ENCODE measurements at regions of chr22 and their contacts with region 1.

Region 1: DNA sequence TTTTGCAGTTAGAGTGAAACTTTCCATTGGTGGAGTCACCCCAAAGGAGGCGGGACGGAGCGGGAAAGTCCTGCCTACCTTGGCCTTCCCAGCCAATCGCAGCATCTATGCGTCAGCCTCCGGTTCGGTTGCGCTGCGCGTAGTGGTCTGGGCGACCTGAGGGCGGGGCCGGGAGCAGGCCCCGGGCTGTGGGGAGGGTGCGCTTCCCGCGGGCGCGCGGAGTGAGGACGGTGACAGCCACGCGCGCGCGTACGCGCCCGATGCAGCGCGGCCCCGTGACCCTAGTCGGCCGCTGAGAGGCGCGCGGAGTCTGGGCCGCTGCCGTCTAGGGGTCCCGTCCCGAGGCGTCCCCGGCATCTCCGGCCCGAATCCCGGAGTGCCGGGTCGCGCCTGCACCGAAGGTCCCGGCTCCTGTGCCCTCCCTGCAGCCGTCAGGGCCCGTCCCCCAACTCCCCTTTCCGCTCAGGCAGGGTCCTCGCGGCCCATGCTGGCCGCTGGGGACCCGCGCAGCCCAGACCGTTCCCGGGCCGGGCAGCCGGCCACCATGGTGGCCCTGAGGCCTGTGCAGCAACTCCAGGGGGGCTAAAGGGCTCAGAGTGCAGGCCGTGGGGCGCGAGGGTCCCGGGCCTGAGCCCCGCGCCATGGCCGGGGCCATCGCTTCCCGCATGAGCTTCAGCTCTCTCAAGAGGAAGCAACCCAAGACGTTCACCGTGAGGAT is at the start of gene NF2:
- DNase-seq: peak; percentile 96 to 100 (median 98)
- ATAC-seq: peak; percentile 97
- H3K4me3 ChIP-seq: peak within 1 kb of the TSS; percentile 82
- H3K4me3 Mint-ChIP-seq: peak within 1 kb of the TSS; percentile 98
- H3K27ac ChIP-seq: peak within 1 kb of the TSS; percentile 87 to 90
- H3K27ac Mint-ChIP-seq: peak within 1 kb of the TSS; percentile 96
- H3K4me1 ChIP-seq: peaks cover 33% of the 10 kb centered on the region
- H3K4me1 Mint-ChIP-seq: peaks cover 37% of the 10 kb centered on the region
- H3K27me3 ChIP-seq: no peaks in the 10 kb centered on the region
- H3K27me3 Mint-ChIP-seq: no peaks in the 10 kb centered on the region
- CTCF ChIP-seq: no peak
- total RNA-seq, gene NF2: 23.1 to 24.5 TPM

Region 2: DNA sequence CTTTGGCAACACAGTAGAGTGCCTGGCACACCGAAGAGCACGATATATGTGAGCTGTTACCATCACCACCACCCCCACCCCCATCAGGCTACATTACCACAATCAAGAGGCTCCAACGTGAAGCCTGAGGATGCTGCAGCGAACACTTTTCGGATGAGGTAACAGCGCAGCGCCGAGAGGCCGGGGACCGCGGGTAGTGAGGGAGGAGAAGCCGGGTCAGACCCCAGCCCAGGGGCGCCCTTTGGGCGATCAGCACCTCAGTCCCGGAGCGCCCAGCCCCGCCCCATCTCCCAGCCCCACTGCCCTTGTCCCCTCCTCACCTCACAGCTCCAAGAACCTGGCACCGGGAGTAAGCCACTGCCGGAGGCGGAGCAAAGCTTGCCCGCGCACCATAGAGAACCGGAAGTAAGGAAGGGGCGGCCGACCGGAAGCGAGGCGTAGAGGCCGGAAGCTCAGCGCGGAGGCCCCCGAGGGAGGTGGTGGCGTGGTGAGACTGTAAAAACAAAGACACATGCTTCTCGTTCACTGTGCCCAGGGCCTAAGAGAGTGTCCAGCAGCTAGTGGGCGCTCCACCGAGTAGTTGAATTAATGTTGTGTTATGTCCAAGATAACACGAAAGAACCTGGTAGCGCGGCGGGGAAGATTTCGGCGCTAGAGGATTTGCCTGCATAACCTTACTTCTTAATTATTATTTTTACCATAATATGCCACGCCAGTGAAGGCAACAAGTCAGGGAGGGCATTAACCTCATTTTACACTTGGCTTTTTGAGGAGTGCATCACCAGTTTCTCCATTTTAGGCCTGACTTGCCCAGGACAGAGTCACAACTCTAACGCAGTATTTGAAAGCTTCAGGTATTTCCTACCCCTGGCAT is 49.9 kb before region 1 on chr22 and contains the start of gene THOC5:
- CTCF ChIA-PET with region 1: no interaction called
- POLR2A ChIA-PET with region 1: interaction called, 32 read pairs
- intact Hi-C with region 1: loop called in 1 of 2 experiments (anchors 1 kb)
- DNase-seq: peak; percentile 80 to 93 (median 86)
- ATAC-seq: peak; percentile 93
- H3K4me3 ChIP-seq: peak within 1 kb of the TSS; percentile 83
- H3K4me3 Mint-ChIP-seq: peak within 1 kb of the TSS; percentile 95
- H3K27ac ChIP-seq: peak within 1 kb of the TSS; percentile 54 to 84
- H3K27ac Mint-ChIP-seq: peak within 1 kb of the TSS; percentile 94
- H3K4me1 ChIP-seq: peaks cover 22% of the 10 kb centered on the region
- H3K4me1 Mint-ChIP-seq: peaks cover 15% of the 10 kb centered on the region
- H3K27me3 ChIP-seq: no peaks in the 10 kb centered on the region
- H3K27me3 Mint-ChIP-seq: no peaks in the 10 kb centered on the region
- CTCF ChIP-seq: no peak
- total RNA-seq, gene THOC5: 27.1 to 32.9 TPM

Region 3: DNA sequence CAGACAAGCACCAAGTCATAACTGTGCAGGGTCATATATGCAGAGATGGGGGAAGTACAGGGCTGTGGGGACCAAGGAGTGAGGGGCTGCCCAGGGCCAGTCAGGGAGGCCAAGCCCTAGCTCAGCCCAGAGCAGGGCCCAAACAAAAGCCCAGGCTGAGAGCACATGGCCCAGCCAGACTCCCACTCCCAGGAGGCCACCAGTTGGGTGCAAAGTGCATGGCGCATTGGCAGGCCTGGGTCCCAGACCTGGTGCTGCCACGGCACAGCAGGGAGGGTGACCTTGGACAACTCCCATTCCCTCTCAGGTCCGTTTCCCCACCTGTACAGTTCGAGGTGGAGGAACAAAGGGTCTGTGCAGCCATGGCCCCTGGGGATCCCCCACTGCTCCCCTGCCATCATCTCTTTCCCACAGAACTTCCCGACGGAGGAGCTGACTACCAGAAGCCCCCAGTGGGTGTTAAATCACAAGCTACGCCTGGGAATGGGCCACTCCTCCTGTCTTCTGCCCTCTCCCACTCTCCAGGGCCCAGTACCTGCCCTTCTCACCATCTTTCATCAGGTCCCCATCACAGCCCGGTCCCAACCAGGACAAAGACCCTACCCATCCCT is 23.2 kb before region 1 on chr22:
- CTCF ChIA-PET with region 1: no interaction called
- POLR2A ChIA-PET with region 1: interaction called, 4 read pairs
- intact Hi-C with region 1: loop called in 1 of 2 experiments (anchors 2 kb)
- DNase-seq: peak in 2 of 14 experiments; percentile 17 to 33
- ATAC-seq: no peak
- H3K4me3 ChIP-seq: peak overlapping the region; percentile 70
- H3K4me3 Mint-ChIP-seq: peak overlapping the region; percentile 95
- H3K27ac ChIP-seq: peak overlapping the region; percentile 34 to 46
- H3K27ac Mint-ChIP-seq: peak overlapping the region; percentile 86
- H3K4me1 ChIP-seq: peaks cover 19% of the 10 kb centered on the region
- H3K4me1 Mint-ChIP-seq: peaks cover 18% of the 10 kb centered on the region
- H3K27me3 ChIP-seq: no peaks in the 10 kb centered on the region
- H3K27me3 Mint-ChIP-seq: no peaks in the 10 kb centered on the region
- CTCF ChIP-seq: no peak

Region 4: GRCh38 chr22:29587938-29588699 is 15.4 kb before region 1 on chr22:
- CTCF ChIA-PET with region 1: interaction called, 7 read pairs
- POLR2A ChIA-PET with region 1: interaction called, 6 read pairs
- intact Hi-C with region 1: loop called in 1 of 2 experiments (anchors 1 kb)
- DNase-seq: peak in 1 of 14 experiments; percentile 31
- ATAC-seq: no peak
- H3K4me3 ChIP-seq: no peak overlapping the region
- H3K4me3 Mint-ChIP-seq: no peak overlapping the region
- H3K27ac ChIP-seq: no peak overlapping the region
- H3K27ac Mint-ChIP-seq: no peak overlapping the region
- H3K4me1 ChIP-seq: peaks cover 12% of the 10 kb centered on the region
- H3K4me1 Mint-ChIP-seq: peaks cover 11% of the 10 kb centered on the region
- H3K27me3 ChIP-seq: no peaks in the 10 kb centered on the region
- H3K27me3 Mint-ChIP-seq: no peaks in the 10 kb centered on the region
- CTCF ChIP-seq: no peak

Region 5: DNA sequence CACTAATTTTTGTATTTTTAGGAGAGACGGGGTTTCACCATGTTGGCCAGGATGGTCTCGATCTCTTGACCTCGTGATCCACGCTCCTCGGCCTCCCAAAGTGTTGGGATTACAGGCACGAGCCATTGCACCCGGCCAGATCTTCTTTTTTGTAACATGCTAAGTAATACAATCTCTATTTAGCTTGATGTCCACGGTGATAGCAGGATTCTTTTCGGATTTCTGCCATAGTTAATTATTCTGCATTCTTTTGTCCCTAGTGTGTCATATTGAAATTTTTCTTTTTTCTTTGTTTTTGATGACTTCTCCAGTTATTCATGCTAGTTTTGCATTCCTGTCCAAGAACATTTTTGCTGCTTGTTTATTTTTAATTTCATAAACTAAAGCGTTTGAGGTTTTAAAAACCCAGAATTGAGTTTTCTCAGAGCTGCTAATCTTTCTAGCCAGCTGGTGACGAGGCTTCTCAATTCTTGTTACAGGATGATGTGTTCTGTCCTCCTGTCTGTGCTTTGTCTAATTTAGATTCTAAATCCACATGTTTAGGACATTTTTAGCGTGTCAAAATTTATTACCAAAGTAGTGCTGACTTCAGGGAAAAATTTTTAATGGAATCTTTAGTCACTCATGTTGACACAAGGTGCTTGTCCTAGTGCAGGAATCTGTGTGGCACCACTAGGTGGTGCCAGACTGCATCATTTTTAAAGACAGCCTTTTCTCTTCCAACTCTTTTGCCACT is 21.7 kb after region 1 on chr22:
- CTCF ChIA-PET with region 1: interaction called, 14 read pairs
- POLR2A ChIA-PET with region 1: interaction called, 22 read pairs
- intact Hi-C with region 1: no loop called
- DNase-seq: peak in 8 of 14 experiments; percentile 9 to 73 (median 40)
- ATAC-seq: peak; percentile 51
- H3K4me3 ChIP-seq: no peak overlapping the region
- H3K4me3 Mint-ChIP-seq: no peak overlapping the region
- H3K27ac ChIP-seq: no peak overlapping the region
- H3K27ac Mint-ChIP-seq: peak overlapping the region; percentile 81
- H3K4me1 ChIP-seq: peaks cover 28% of the 10 kb centered on the region
- H3K4me1 Mint-ChIP-seq: peaks cover 76% of the 10 kb centered on the region
- H3K27me3 ChIP-seq: no peaks in the 10 kb centered on the region
- H3K27me3 Mint-ChIP-seq: no peaks in the 10 kb centered on the region
- CTCF ChIP-seq: peak; percentile 93

Region 6: GRCh38 chr22:29837780-29838598 is 234.5 kb after region 1 on chr22 and contains the start of gene ASCC2:
- CTCF ChIA-PET with region 1: no interaction called
- POLR2A ChIA-PET with region 1: interaction called, 6 read pairs
- intact Hi-C with region 1: loop called in 1 of 2 experiments (anchors 1 kb)
- DNase-seq: peak; percentile 97 to 100 (median 99)
- ATAC-seq: peak; percentile 97
- H3K4me3 ChIP-seq: peak within 1 kb of the TSS; percentile 72
- H3K4me3 Mint-ChIP-seq: peak within 1 kb of the TSS; percentile 94
- H3K27ac ChIP-seq: peak within 1 kb of the TSS; percentile 75 to 88
- H3K27ac Mint-ChIP-seq: peak within 1 kb of the TSS; percentile 94
- H3K4me1 ChIP-seq: peaks cover 27% of the 10 kb centered on the region
- H3K4me1 Mint-ChIP-seq: peaks cover 50% of the 10 kb centered on the region
- H3K27me3 ChIP-seq: no peaks in the 10 kb centered on the region
- H3K27me3 Mint-ChIP-seq: no peaks in the 10 kb centered on the region
- CTCF ChIP-seq: no peak
- total RNA-seq, gene ASCC2: 67.1 to 68.3 TPM

Region 7: DNA sequence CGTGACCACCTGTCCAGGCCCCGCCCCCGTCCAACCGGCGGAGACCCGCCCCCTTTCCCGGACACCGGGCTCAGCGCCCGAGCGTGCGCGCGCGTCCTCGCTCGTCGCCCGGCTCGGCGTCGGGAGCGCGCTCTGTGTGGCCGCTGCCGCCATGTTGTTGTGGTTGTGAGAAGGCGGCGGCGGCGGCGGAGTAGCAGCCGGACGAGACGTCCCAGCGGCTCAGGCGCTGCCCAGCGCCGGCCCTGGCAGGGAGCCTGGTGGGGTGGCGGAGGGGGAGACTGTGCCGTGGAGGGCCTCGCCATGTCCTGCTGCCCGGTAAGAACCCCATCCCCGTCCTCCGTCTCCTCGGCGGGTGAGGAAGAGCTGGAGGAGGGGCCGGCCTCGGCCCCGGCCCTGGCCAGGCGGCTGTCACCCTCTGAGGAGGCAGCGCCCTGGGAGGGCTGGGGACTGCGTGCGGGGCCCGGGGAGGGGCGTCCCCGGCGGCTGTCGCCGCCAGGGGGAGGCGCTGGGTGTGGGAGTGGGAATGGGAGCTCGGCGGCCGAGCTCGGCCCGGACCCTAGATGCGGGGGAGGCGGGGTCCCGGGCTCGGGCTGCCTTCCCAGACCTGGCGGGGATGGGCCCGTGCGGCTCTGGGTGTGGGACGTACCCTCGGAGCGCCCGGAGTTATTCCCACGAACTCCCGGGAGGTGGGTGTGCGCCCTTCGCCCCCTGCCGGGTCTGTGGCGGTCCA is 279.7 kb after region 1 on chr22 and contains the start of gene MTMR3:
- CTCF ChIA-PET with region 1: interaction called, 3 read pairs
- POLR2A ChIA-PET with region 1: interaction called, 4 read pairs
- intact Hi-C with region 1: loop called in 1 of 2 experiments (anchors 5 kb)
- DNase-seq: peak; percentile 69 to 96 (median 91)
- ATAC-seq: peak; percentile 75
- H3K4me3 ChIP-seq: peak within 1 kb of the TSS; percentile 96
- H3K4me3 Mint-ChIP-seq: peak within 1 kb of the TSS; percentile 96
- H3K27ac ChIP-seq: peak within 1 kb of the TSS; percentile 15 to 75
- H3K27ac Mint-ChIP-seq: peak within 1 kb of the TSS; percentile 87
- H3K4me1 ChIP-seq: peaks cover 22% of the 10 kb centered on the region
- H3K4me1 Mint-ChIP-seq: peaks cover 2% of the 10 kb centered on the region
- H3K27me3 ChIP-seq: no peaks in the 10 kb centered on the region
- H3K27me3 Mint-ChIP-seq: no peaks in the 10 kb centered on the region
- CTCF ChIP-seq: peak; percentile 51
- total RNA-seq, gene MTMR3: 57.8 to 60.6 TPM

Measured in CD4-positive, alpha-beta T cell (primary cell).